Activated CD4-positive, alpha-beta memory T cell treated with anti-CD3 and anti-CD28 coated beads, Interleukin-2, amount 10 ng/mL, durations not matched to agents 7 days and 5 days (primary cell): ENCODE measurements at regions of chr1 and their contacts with region 1.

Region 1: DNA sequence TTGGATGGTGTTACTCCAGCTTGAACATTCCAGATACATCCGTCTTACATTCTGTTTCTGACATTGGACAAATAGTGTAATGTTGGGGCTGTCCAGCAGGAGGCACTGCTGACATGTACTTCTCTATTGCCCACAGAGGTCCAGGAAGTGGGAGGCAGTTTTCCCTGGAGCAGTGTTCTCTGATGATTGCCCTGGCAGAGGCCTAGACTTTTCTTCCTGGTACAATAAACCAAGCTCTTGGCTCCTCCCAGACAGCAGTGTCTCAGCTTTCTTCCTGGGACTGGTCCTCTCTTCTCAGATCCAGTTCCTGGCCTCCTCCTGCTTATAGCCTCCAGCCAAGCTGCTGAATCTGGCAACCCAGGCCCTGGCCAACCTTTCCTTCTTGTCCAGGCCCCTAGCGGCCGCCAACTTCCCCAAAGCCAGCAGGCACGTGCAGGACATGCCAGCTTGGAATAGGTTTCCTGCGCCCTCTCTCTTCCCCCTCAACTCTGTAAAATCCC is 14.9 kb upstream of the IFNLR1 start:
- DNase-seq: peak; percentile 65
- H3K4me3 Mint-ChIP-seq: no peak overlapping the region
- H3K27ac Mint-ChIP-seq: no peak overlapping the region
- H3K4me1 Mint-ChIP-seq: peaks cover 21% of the 10 kb centered on the region
- H3K27me3 Mint-ChIP-seq: peaks cover 6% of the 10 kb centered on the region

Region 2: DNA sequence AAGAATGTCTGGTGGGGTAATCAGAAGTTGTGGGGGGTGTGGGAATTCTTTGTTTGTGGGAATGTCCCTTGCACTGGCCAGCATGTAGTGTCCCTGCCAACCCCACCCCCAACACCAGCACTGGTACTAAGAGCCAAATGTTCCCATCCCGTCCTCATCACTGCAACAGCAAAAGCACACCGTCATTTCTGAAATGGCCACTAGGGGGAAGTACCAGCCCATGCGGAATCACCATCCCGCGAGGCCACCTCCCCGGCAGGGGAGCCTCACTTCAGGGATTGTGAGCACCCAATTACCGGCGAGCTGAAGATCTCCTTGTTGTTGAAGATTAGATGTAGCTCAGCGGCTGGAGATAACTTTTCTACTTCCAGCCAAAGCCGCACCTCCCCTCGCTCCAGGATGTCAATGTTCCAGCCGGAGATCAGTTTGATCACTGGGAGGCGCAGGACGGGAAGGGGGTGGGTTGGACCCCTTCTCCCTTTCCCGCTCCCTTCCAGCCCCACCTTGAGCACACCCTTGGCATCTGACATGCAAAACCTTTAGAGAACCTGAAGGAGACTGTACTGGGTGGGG is 131.1 kb before region 1 on chr1:
- CTCF ChIA-PET with region 1: interaction called, 10 read pairs
- POLR2A ChIA-PET with region 1: no interaction called
- DNase-seq: peak; percentile 78
- H3K4me3 Mint-ChIP-seq: no peak overlapping the region
- H3K27ac Mint-ChIP-seq: no peak overlapping the region
- H3K4me1 Mint-ChIP-seq: peaks cover 4% of the 10 kb centered on the region
- H3K27me3 Mint-ChIP-seq: peaks cover 13% of the 10 kb centered on the region

Region 3: DNA sequence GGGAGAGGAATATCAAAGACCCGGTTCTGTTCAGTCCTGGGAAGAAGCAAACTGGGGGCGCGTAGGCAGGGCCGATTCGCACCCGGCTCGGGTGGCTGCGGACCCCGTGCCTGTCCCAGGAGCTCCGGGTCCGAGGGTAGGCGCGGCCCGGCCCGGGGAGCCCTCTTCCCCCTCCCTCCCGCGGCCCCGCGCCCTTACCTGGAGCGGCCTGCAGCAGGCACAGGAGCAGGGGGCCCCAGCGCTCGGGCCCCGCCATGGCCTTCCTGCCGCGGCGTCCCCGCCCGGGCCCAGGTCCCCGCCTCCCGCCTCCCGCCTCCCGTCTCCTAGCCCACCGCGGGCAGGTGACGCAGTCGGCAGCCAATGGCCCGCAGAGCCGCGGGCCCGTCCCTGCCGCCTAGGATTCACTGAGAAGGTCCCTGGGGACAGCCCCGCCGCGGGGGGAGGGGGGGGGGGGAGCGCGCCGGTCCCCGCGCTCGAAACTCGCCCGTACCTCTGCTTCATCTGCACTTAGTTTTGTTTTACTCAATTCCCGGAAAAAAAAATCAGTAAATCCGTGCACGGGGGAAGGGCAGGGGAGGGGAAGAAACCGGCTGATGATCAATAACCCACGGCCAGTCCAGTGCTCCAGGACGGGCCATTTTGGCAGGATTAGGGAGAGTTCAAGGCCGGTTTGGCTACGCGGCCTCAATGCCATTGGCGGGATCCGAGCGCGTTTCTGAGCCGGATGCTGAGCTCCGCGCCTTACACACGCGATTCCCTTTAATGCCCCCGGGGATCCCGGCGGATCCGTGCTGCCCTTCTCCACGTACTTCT is 14.8 kb before region 1 on chr1 and contains the start of gene IFNLR1:
- CTCF ChIA-PET with region 1: interaction called, 37 read pairs
- POLR2A ChIA-PET with region 1: interaction called, 6 read pairs
- DNase-seq: peak; percentile 79
- H3K4me3 Mint-ChIP-seq: peak within 1 kb of the TSS; percentile 79
- H3K27ac Mint-ChIP-seq: peak within 1 kb of the TSS; percentile 38
- H3K4me1 Mint-ChIP-seq: peaks cover 50% of the 10 kb centered on the region
- H3K27me3 Mint-ChIP-seq: peaks cover 2% of the 10 kb centered on the region
- total RNA-seq, gene IFNLR1: 6.0 to 6.1 TPM

Region 4: GRCh38 chr1:24385160-24385940 is 183.4 kb after region 1 on chr1:
- CTCF ChIA-PET with region 1: interaction called, 441 read pairs
- POLR2A ChIA-PET with region 1: interaction called, 32 read pairs
- DNase-seq: peak; percentile 49
- H3K4me3 Mint-ChIP-seq: no peak overlapping the region
- H3K27ac Mint-ChIP-seq: peak overlapping the region; percentile 82
- H3K4me1 Mint-ChIP-seq: peaks cover 36% of the 10 kb centered on the region
- H3K27me3 Mint-ChIP-seq: no peaks in the 10 kb centered on the region

Region 5: DNA sequence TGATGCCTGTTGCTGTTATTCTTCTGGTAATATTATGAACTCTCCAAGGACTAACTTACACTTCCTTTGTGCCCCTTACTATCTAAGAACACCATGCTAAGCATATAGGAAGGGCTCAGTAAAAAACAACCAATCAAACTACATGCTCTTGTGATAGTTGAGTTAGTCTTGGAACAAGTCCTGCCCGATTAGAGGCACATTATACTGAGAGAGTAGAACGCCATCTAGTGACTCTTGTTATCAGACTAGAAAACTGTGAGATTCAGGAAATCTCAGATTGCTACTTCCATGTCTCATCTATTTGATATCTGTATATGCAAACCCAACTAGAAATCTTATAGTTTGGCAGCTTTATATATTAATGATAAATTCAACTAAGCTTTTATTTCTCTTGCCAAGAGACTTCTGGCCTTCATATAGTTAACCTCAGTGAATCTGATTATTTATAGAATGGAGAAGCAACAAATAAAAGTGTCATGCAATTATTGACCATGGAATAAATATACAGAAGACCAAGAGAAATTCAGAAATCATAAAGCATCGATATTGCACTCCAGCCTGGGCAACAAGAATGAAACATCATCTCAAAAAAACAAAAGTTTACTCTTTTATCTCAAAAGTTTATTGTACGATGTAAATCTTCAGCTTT is 433.3 kb after region 1 on chr1:
- CTCF ChIA-PET with region 1: interaction called, 18 read pairs
- POLR2A ChIA-PET with region 1: no interaction called
- DNase-seq: no peak
- H3K4me3 Mint-ChIP-seq: no peak overlapping the region
- H3K27ac Mint-ChIP-seq: no peak overlapping the region
- H3K4me1 Mint-ChIP-seq: peaks cover 9% of the 10 kb centered on the region
- H3K27me3 Mint-ChIP-seq: peaks cover 10% of the 10 kb centered on the region